ENCODE measurements at regions of chr17 and their contacts with region 1.

Region 1: DNA sequence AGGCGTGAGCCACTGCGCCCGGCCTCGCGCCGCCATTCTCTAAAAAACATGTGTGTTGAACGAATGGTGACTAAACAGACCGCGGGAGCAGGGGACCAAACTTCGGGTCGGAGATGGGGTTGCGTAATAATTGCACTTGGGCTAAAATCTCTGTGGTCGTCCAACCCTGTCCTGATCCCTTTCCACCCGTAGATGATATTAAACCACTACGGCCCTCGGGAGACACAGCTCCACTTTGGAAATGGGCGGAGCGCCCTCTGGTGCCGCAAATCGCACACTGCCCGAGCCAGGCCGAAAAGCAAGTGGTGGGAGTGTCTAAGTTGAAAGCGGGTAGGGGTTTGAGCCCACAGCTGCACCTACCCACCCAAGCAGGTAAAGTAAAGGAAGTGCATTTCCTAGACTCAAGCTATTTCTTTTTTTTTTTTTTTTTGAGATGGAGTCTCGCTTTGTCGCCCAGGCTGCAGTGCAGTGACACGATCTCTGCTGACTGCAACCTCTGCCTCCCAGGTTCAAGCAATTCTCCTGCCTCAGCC is 17.0 kb downstream of the CAVIN1 start:
- DNase-seq: peak; percentile 83

Region 2: DNA sequence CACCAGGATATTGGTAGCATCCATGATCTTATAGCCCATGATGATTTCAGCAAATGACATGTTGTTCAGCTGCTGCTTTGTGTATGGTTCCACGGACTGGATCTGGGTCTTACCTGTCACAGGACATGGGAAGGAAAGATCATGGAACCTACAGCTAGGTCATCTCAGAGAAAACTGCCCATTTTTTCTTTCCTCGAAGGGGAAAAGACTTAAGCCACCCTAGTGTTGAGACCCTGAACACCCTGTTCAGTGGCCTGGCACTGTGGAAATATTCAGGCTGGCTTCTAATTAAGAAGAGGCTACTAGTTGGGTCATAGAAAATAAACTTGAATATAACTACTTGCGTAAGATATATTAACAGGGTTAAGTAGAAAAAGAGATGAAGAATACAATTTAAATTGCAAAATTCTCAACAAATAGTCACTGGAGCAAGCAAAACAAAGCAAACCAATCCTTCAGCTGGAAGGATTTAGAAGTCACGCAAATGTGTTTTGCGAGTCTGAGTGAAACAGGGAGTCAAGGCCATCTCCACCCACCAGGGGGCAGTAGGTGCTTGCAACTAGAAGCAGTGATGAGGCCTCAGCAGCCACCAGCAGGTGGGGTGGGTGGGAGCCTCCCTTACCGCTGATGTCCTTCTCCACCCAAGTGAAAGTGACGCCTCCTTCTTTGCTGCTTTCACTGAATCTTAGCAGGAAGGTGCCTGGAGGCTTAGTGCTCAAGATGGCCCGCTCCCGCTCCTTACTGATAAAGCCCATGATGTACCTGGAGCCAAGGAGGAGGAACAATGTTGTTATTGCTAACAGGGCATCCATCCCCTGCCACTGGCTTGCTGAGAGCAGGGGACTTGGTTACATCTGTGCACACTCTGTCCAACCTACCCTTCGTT is 83.4 kb before region 1 on chr17:
- CTCF ChIA-PET with region 1: interaction called, 34 read pairs
- POLR2A ChIA-PET with region 1: no interaction called
- DNase-seq: peak; percentile 93

Region 3: GRCh38 chr17:42388381-42389134 is 17.5 kb before region 1 on chr17 and contains the start of gene STAT3:
- CTCF ChIA-PET with region 1: interaction called, 9 read pairs
- POLR2A ChIA-PET with region 1: interaction called, 11 read pairs
- DNase-seq: peak; percentile 100

Region 4: GRCh38 chr17:42422958-42423712 is 17.1 kb after region 1 on chr17 and contains the start of gene CAVIN1:
- CTCF ChIA-PET with region 1: interaction called, 10 read pairs
- POLR2A ChIA-PET with region 1: interaction called, 12 read pairs
- DNase-seq: peak; percentile 76

Region 5: DNA sequence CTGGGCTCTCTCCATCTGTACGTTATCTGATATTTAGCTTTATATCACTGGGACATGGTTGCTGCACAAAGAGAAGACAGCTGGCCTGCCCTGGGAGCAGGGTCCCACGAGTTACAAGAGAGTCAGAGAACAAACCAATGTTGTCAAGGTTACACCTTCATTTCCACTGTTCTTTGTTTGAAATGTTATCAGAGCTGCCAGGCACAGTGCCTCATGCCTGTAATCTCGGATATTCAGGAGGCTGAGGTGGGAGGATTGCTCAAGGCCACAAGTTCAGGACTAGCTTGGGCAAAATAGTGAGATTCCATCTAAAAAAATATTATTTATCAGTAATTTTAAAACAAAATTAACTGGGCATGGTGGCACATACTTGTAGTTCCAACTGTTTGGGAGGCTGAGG is 87.3 kb after region 1 on chr17:
- CTCF ChIA-PET with region 1: no interaction called
- POLR2A ChIA-PET with region 1: no interaction called
- DNase-seq: no peak

Measured in HEK293T (cell line).